Heart left ventricle (tissue), 16 donors: ENCODE measurements at regions of chr1 and their contacts with region 1.

Region 1: GRCh38 chr1:202184750-202185460 is 8.7 kb upstream of the LGR6 start:
- DNase-seq: peak; percentile 67 to 85 (median 78)
- ATAC-seq: peak; percentile 45 to 80 (median 64)
- H3K4me3 ChIP-seq: no peak overlapping the region
- H3K27ac ChIP-seq: no peak overlapping the region
- H3K4me1 ChIP-seq: peaks cover 0 to 8% (median 0%) of the 10 kb centered on the region in 12 donors
- H3K27me3 ChIP-seq: peaks cover 0 to 20% (median 0%) of the 10 kb centered on the region in 9 donors
- CTCF ChIP-seq: peak; percentile 66 to 87 (median 76)
- POLR2A ChIP-seq: no peak

Region 2: GRCh38 chr1:202716654-202717053 is 531.7 kb after region 1 on chr1:
- intact Hi-C with region 1: loop called (anchors 2 to 5 kb)
- DNase-seq: no peak
- ATAC-seq: no peak
- H3K4me3 ChIP-seq: no peak overlapping the region
- H3K27ac ChIP-seq: no peak overlapping the region
- H3K4me1 ChIP-seq: peaks cover 0 to 3% (median 0%) of the 10 kb centered on the region in 12 donors
- H3K27me3 ChIP-seq: peaks cover 0 to 61% (median 0%) of the 10 kb centered on the region in 9 donors
- CTCF ChIP-seq: no peak
- POLR2A ChIP-seq: no peak